Activated T-helper 2 cell treated with anti-CD3 and anti-CD28 coated beads, Interferon-gamma antibody, Interleukin-2, Interleukin-4, amounts not matched to agents 10 μg/mL and 5 μg/mL and 100 μg/mL, durations not matched to agents 14 hours and 24 hours and 36 hours (primary cell): ENCODE measurements at regions of chr4 and their contacts with region 1.

Region 1: GRCh38 chr4:3292571-3293400 is at the start of gene RGS12:
- DNase-seq: peak; percentile 82
- H3K4me3 Mint-ChIP-seq: peak within 1 kb of the TSS; percentile 88
- H3K27ac Mint-ChIP-seq: peak within 1 kb of the TSS; percentile 46
- H3K4me1 Mint-ChIP-seq: peaks cover 10% of the 10 kb centered on the region
- H3K27me3 Mint-ChIP-seq: peaks cover 38% of the 10 kb centered on the region
- total RNA-seq, gene RGS12: 7.0 and 8.3 TPM in 2 replicates

Region 2: GRCh38 chr4:3201718-3202702 is 90.8 kb before region 1 on chr4:
- intact Hi-C with region 1: loop called (anchors 5 kb)
- DNase-seq: peak; percentile 80
- H3K4me3 Mint-ChIP-seq: peak overlapping the region; percentile 63
- H3K27ac Mint-ChIP-seq: peak overlapping the region; percentile 99
- H3K4me1 Mint-ChIP-seq: peaks cover 40% of the 10 kb centered on the region
- H3K27me3 Mint-ChIP-seq: no peaks in the 10 kb centered on the region

Region 3: GRCh38 chr4:3305598-3306371 is 13.0 kb after region 1 on chr4:
- intact Hi-C with region 1: no loop called
- DNase-seq: no peak
- H3K4me3 Mint-ChIP-seq: no peak overlapping the region
- H3K27ac Mint-ChIP-seq: no peak overlapping the region
- H3K4me1 Mint-ChIP-seq: peaks cover 35% of the 10 kb centered on the region
- H3K27me3 Mint-ChIP-seq: peaks cover 8% of the 10 kb centered on the region